ENCODE measurements at regions of chr7 and their contacts with region 1.

Region 1: DNA sequence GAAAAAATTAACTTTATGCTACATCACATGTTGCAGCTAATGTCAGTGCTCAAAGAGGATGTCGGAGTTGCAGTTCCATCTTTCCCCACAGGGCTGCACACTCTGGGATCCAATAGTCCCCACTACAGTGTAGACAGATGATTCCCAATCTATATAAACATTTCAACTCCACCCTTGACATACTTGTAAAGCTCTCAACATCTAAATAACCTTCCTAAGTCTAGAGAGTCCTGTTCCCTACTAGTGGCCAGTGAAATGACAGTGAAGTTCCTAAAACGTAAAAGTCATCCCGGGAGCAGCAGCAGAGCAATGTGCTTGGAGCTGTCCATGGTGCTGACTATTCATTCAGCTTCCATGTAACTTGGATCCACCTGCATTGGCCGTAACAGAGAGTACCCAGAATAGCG is 145.1 kb downstream of the GRM8 start:
- DNase-seq: peak in 1 of 10 donors; percentile 33
- H3K4me3 ChIP-seq: no peak overlapping the region
- H3K27ac ChIP-seq: no peak overlapping the region
- H3K27me3 ChIP-seq: peaks cover 0 to 5% (median 0%) of the 10 kb centered on the region in 45 donors
- CTCF ChIP-seq: peak; percentile 30 to 79 (median 56)

Region 2: DNA sequence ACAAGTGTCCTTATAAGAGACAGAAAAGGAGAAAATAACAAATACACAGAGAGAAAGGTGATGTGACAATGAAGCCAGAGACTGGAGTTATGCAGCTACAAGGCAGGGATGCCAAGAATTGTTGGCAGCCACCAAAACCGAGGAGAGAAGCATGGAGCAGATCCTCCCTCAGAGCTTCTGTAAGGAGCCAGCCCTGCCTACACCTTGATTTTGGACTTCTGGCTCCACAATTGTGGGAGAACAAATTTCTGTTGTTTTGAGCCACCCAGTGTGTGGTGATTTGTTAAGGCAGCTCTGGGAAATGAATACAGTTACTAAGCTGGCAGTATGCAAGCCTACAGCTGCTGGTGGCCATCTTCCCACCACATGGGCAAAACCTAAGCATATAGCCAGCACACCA is 18.5 kb before region 1 on chr7:
- intact Hi-C with region 1: no loop called
- DNase-seq: peak in 8 of 10 donors; percentile 3 to 78 (median 56)
- H3K4me3 ChIP-seq: no peak overlapping the region
- H3K27ac ChIP-seq: peak overlapping the region in 10 of 59 donors; percentile 15 to 54 (median 44)
- H3K27me3 ChIP-seq: no peaks in the 10 kb centered on the region
- CTCF ChIP-seq: no peak

Region 3: DNA sequence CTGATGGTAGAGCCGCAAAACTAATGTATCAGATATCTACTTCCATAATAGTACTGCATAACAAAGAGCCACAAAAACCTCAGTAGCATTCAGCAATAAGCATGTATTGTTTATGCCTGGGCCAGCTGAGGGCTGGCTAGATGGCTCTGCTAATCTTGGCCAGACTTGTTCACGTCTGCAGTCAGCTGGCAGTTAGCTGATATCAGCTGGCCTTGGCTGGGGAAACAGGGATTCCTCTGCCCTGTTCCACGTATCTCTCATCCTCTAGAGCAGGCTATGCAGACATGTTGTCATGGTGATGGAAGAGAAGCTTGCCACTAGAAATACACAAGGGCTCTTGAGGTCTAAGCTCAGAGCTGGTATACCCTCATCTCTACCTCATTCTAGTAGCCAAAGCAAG is 82.3 kb after region 1 on chr7:
- intact Hi-C with region 1: loop called in 1 of 2 experiments (anchors 5 kb)
- DNase-seq: peak in 6 of 10 donors; percentile 32 to 51 (median 41)
- H3K4me3 ChIP-seq: peak overlapping the region in 8 of 59 donors; percentile 2 to 32 (median 12)
- H3K27ac ChIP-seq: peak overlapping the region in 37 of 59 donors; percentile 1 to 73 (median 46)
- H3K27me3 ChIP-seq: no peaks in the 10 kb centered on the region
- CTCF ChIP-seq: no peak

Region 4: DNA sequence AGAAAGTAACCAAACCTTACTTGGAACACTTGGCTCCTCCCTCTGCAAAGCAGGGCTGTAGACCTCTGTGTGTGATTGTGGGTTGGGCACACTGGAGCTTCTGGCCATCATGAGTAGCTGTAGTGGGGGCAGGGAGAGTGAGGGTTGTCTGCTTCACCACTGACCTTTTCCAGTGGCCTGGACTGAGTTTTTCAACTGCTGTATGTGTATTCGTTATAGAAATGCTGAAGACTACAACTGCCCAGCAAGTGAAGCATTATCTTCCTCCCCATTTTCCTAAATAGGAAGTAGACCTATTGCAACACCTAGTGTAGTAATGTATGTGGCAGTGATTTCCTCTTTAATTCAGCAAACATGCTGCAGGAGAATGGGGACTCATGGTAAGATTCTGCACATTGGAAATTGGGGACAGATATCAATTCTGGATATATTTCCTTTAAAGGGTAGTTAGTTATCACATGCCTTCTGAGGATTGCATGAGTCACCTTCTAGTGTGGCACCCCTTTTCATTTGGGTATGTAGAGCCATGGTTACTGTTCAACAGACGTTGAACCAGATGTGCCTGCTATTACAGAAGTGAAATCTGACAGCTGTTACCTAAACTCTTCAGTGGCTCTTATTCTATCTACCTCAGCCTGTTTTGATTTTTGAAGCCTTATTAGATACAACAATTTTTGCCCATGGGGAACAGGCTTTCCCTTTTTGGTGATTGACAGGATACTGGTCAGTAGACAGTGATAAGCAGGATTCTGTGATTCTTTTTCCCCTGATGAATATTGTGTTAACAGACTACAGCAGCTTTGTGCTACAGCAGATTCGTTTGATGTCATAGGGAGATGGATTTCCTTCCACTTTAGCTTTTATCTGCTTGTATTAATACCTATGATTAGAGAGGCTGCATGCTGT is 675.3 kb after region 1 on chr7:
- intact Hi-C with region 1: no loop called
- DNase-seq: no peak
- H3K4me3 ChIP-seq: no peak overlapping the region
- H3K27ac ChIP-seq: no peak overlapping the region
- H3K27me3 ChIP-seq: no peaks in the 10 kb centered on the region
- CTCF ChIP-seq: no peak

Measured in dorsolateral prefrontal cortex (tissue), 120 donors.